Caki2 (cell line): ENCODE measurements at regions of chr5 and their contacts with region 1.

Region 1: GRCh38 chr5:150503977-150504620 is 3.8 kb upstream of the NDST1 start:
- DNase-seq: no peak

Region 2: GRCh38 chr5:150175076-150175935 is 328.8 kb before region 1 on chr5:
- in situ Hi-C with region 1: no loop called
- DNase-seq: peak; percentile 2

Region 3: GRCh38 chr5:150559686-150560085 is 55.6 kb after region 1 on chr5:
- in situ Hi-C with region 1: loop called (anchors 10 kb)
- DNase-seq: no peak

Region 4: DNA sequence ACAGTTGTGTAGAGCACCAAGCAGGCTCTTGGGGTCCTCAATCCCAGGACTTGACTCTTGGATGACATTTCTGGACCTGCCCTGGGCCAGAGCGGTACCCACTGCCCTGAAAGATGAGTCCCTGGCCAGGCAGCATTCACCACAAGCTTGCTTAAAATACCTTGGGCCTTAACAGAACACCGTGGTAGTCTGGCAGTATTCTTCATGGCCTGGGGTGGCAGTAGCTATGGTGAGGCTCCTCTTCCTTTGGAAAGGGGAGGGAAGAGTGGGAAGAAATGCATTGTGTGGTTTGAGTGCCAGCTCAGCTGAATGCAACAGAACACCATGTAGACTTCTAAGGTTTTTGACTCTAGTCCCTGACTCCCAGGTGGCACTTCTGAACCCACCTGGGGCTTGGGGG is 312.8 kb after region 1 on chr5:
- in situ Hi-C with region 1: no loop called
- DNase-seq: no peak